Activated CD8-positive, alpha-beta T cell treated with anti-CD3 and anti-CD28 coated beads for 36 hours (primary cell): ENCODE measurements at regions of chr7 and their contacts with region 1.

Region 1: GRCh38 chr7:30727061-30727945 is 24.6 kb upstream of the INMT start:
- DNase-seq: peak; percentile 74
- ATAC-seq: peak; percentile 91
- H3K4me3 Mint-ChIP-seq: peak overlapping the region; percentile 78
- H3K27ac Mint-ChIP-seq: peak overlapping the region; percentile 93
- H3K4me1 Mint-ChIP-seq: peaks cover 53% of the 10 kb centered on the region
- H3K27me3 Mint-ChIP-seq: no peaks in the 10 kb centered on the region
- CTCF ChIP-seq: no peak

Region 2: DNA sequence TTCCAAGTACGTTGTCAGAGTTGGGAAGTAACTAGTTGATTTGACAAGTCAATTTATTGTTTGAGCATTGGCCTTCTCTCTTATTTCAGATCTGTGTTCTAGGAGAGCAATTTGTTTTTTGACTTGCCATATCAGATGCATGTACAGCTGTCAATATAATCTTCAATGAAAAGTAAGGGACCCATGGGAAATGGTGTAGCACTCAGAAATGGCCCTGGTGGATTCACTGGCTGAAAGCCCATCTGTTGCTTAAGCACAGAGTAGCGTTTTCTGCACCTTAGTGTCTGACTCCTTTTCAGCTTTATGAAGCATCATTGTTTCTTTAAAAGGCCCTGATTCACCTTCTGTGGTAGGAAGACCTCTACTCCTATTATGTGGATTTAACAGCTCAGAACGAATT is 122.4 kb before region 1 on chr7:
- CTCF ChIA-PET with region 1: no interaction called
- POLR2A ChIA-PET with region 1: no interaction called
- intact Hi-C with region 1: no loop called
- DNase-seq: no peak
- ATAC-seq: no peak
- H3K4me3 Mint-ChIP-seq: no peak overlapping the region
- H3K27ac Mint-ChIP-seq: no peak overlapping the region
- H3K4me1 Mint-ChIP-seq: peaks cover 42% of the 10 kb centered on the region
- H3K27me3 Mint-ChIP-seq: no peaks in the 10 kb centered on the region
- CTCF ChIP-seq: no peak

Region 3: GRCh38 chr7:30630986-30631385 is 96.3 kb before region 1 on chr7:
- CTCF ChIA-PET with region 1: no interaction called
- POLR2A ChIA-PET with region 1: no interaction called
- intact Hi-C with region 1: loop called (anchors 10 kb)
- DNase-seq: no peak
- ATAC-seq: no peak
- H3K4me3 Mint-ChIP-seq: no peak overlapping the region
- H3K27ac Mint-ChIP-seq: no peak overlapping the region
- H3K4me1 Mint-ChIP-seq: peaks cover 14% of the 10 kb centered on the region
- H3K27me3 Mint-ChIP-seq: no peaks in the 10 kb centered on the region
- CTCF ChIP-seq: no peak

Region 4: DNA sequence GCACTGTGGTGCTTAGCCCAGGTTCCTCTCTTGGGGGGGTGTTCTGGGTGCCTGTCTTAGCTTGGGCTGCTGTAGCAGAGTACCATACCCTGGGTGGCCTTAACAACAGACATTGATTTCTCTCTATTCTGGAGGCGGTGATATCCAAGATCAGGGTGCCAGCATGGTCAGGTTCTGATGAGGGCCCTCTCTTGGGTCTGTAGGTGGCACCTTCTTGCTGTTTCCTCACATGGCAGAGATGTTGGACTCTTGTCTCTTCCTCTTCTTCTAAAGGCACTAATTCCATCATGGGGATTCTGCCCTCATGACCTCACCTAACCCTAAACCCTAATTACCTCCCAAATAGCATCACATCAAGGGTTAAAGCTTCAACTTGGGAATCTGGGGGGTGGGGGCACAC is 25.1 kb before region 1 on chr7:
- CTCF ChIA-PET with region 1: interaction called, 11 read pairs
- POLR2A ChIA-PET with region 1: interaction called, 3 read pairs
- intact Hi-C with region 1: no loop called
- DNase-seq: peak; percentile 33
- ATAC-seq: peak; percentile 56
- H3K4me3 Mint-ChIP-seq: no peak overlapping the region
- H3K27ac Mint-ChIP-seq: no peak overlapping the region
- H3K4me1 Mint-ChIP-seq: peaks cover 3% of the 10 kb centered on the region
- H3K27me3 Mint-ChIP-seq: no peaks in the 10 kb centered on the region
- CTCF ChIP-seq: no peak

Region 5: DNA sequence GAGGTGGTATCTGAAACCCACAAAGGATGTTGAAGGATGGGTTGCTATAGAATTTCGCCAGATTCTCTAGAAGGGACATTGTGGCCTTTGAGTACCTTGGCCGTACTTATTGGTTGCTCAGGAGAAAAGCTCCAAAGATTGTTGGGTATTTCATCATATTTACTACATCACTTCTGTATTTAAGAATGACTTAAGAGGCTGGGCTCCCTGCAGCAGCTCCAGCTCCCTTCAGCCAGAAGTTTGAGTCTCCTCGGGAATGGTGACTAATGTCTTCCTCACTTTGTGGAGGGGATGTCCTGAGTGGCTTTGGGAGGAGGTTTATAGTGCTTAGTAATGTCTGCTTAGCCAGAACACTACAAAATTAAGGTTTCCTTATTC is 62.0 kb after region 1 on chr7:
- CTCF ChIA-PET with region 1: no interaction called
- POLR2A ChIA-PET with region 1: no interaction called
- intact Hi-C with region 1: no loop called
- DNase-seq: no peak
- ATAC-seq: no peak
- H3K4me3 Mint-ChIP-seq: no peak overlapping the region
- H3K27ac Mint-ChIP-seq: no peak overlapping the region
- H3K4me1 Mint-ChIP-seq: no peaks in the 10 kb centered on the region
- H3K27me3 Mint-ChIP-seq: no peaks in the 10 kb centered on the region
- CTCF ChIP-seq: no peak